Posterior vena cava (tissue), 2 donors: ENCODE measurements at regions of chr11 and their contacts with region 1.

Region 1: DNA sequence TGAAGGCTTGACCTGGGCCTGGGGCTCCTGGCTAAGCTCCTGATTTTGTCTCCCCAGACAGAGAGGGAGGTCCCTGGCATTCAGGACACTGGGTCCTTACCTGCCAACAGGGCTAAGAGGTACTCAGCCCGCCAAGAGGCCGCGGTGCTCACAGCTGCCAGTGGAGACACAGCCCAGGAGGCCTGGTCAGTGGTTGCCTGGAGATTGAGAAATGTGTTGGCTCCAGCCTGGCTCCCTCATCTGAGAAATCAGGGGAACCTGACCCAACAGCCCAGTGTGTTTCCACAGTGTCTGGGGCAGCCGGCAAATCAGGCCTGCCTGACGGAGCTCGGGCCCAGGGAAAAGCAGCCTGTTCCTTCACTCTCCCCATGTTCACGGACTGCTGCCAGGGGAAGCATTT is 79.4 kb upstream of the NAV2 start:
- DNase-seq: peak; percentile 91

Region 2: GRCh38 chr11:19673924-19674729 is 40.9 kb after region 1 on chr11:
- intact Hi-C with region 1: loop called in 1 of 2 experiments (anchors 5 kb)
- DNase-seq: peak; percentile 94